Activated naive CD8-positive, alpha-beta T cell treated with anti-CD3 and anti-CD28 coated beads, Interleukin-2, amount 10 ng/mL, durations not matched to agents 7 days and 5 days (primary cell): ENCODE measurements at regions of chr1 and their contacts with region 1.

Region 1: DNA sequence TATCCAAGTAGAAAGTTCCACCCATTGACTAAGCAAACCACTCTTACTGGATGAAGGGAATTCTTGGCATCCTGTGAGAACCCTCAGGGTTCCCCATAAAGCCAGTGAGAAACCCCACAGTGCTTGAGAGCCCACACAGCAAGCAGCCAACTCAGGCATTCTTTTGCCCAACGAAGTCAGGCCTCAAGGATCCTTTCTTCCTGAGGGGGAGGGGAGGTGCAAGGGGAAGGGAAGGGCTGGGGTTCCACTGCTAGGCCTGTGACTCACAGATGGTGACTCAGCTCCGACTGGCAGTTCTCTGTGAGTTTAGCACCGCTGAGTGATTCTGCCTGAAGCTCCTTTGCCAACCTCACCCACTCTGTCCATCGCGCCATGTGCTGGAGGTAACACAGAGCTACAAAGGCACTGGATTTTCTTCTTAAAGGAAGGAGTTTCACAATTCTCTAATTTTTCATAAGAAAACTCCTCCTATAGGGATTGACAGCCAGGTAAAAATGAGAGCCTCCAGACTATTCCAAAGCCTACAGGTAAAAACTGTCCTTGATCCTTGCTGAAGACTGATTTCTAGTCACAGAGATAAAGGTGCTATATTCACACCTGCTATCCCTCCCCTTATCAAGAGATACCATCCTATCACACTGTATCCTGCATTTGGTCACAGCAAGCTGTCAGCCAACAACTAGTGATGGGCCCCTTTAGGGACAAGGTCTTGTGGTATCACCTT is 4.8 kb downstream of the ENO1 start:
- DNase-seq: peak; percentile 54
- ATAC-seq: peak; percentile 28
- H3K4me3 Mint-ChIP-seq: peak overlapping the region; percentile 96
- H3K27ac Mint-ChIP-seq: peak overlapping the region; percentile 90
- H3K4me1 Mint-ChIP-seq: peaks cover 51% of the 10 kb centered on the region
- H3K27me3 Mint-ChIP-seq: no peaks in the 10 kb centered on the region

Region 2: DNA sequence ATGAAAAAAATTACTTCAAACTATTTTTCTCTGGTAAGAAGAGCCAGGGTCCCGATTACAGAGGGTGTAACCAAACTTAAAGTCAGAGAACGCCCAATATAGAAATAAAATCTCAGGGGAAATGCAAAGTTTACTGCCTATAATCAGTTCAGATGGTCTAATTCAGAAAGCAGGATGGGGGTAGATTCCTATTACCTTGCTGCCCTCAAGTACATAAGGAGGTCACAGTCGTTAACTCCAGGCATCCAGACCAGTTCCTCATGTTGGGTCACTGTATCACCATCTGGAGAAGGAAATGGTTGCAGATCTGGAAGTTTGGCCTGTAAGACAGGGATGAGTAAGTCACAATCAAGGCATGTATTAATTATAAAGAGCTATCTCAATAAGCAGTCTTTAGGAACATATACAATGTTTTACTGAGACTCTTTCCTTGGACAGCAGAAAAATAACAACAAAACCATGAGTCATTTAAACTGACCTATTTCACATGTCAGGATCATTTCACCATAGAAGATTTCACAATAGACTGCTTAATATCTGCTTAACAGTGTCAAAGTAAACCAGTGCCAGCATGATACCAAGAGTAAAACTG is 376.4 kb before region 1 on chr1:
- POLR2A ChIA-PET with region 1: no interaction called
- DNase-seq: no peak
- ATAC-seq: no peak
- H3K4me3 Mint-ChIP-seq: no peak overlapping the region
- H3K27ac Mint-ChIP-seq: no peak overlapping the region
- H3K4me1 Mint-ChIP-seq: peaks cover 8% of the 10 kb centered on the region
- H3K27me3 Mint-ChIP-seq: no peaks in the 10 kb centered on the region

Region 3: DNA sequence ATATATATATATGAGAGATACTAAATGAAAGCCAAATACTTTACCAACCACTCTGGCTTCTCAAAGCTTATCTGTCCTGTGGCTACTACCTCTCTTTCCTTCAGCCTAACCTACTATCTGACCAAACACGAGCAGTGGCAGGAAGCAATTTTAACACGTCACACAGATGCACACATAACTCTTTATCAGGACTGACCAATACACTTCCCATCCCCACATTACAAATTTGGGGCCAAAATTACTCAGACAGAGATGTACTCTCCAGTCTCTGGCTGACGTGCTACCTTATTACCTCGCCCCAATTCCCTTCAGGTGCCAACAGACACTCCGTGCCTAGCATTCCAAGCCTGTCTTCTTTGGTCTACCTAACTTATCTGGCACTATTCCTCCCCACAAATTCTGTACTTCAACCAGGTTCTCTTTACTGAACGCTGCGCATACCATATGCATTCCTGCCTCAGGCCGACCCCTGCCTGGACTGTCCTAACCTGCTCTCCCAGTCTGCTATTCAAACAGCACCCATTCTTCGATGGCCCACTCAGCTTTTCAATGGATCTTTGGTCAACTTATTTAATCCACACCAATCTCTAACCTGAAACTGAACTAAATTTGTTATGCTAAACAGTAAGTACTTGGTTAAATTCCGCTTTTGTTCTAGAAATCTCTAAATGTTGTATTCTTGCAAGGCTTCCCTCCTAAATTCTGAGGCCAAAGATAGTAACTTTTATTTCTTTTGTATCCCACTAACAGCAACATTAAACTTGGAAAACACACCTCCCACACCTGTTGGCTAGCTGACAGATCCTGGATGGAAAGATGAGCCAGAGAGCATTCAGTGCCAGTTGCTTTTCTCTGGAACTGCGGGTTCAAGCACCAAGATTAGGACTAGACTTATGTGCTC is 84.1 kb before region 1 on chr1:
- POLR2A ChIA-PET with region 1: no interaction called
- DNase-seq: no peak
- ATAC-seq: no peak
- H3K4me3 Mint-ChIP-seq: no peak overlapping the region
- H3K27ac Mint-ChIP-seq: no peak overlapping the region
- H3K4me1 Mint-ChIP-seq: peaks cover 3% of the 10 kb centered on the region
- H3K27me3 Mint-ChIP-seq: no peaks in the 10 kb centered on the region

Region 4: GRCh38 chr1:8970870-8971337 is 97.2 kb after region 1 on chr1:
- POLR2A ChIA-PET with region 1: interaction called, 179 read pairs
- DNase-seq: peak; percentile 70
- ATAC-seq: peak; percentile 80
- H3K4me3 Mint-ChIP-seq: peak overlapping the region; percentile 97
- H3K27ac Mint-ChIP-seq: peak overlapping the region; percentile 100
- H3K4me1 Mint-ChIP-seq: peaks cover 37% of the 10 kb centered on the region
- H3K27me3 Mint-ChIP-seq: no peaks in the 10 kb centered on the region